ENCODE measurements at regions of chr6 and their contacts with region 1.

Region 1: DNA sequence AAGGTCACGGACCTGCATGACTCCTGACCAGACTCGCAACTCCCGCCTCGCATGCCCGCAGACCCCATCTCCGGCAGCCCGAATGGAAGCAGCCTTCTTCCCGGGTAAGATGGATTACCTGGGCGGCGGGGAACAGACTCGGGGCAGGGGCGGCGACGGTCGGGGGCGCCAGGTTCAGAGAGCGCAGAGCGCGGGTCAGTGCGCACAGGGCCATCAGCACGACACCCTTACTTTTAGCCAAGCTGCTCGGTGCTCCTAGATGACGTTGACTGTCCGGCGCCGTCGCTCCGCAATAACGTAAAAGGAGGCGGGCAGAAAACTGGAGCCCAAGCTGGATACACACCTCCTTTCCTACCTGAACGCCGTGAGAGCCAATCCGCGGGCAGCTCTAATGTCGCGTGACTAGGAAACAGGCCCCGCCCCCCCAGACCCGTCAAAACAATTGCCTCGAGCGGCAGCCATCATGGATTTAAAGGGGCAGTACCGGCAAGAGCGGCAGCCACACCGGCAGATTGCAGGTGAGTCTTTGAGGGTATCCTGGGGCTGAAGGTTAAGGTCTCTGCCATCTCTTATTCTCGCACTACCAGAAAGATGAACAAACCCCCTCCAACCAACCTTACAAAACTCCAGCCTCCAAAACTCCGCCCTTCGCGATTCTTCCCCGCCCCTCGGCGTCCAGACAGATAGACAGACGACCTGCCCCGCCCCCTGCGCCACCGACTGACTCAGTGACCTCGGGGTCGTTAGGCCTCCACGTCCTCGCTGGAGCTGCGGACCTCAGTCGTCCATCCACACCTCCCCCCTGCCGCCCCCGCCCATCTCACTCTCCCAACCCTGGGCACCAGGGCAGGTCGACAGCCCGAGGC is at the starts of genes KLC4 and MRPL2:
- H3K4me3 ChIP-seq: peak within 1 kb of the TSS; percentile 96
- H3K27ac ChIP-seq: peak within 1 kb of the TSS; percentile 76
- H3K4me1 ChIP-seq: peaks cover 9% of the 10 kb centered on the region
- CTCF ChIP-seq: no peak

Region 2: GRCh38 chr6:43045371-43045930 is 13.9 kb before region 1 on chr6:
- CTCF ChIA-PET with region 1: interaction called, 3 read pairs
- POLR2A ChIA-PET with region 1: interaction called, 15 read pairs
- H3K4me3 ChIP-seq: no peak overlapping the region
- H3K27ac ChIP-seq: no peak overlapping the region
- H3K4me1 ChIP-seq: no peaks in the 10 kb centered on the region
- CTCF ChIP-seq: no peak

Region 3: DNA sequence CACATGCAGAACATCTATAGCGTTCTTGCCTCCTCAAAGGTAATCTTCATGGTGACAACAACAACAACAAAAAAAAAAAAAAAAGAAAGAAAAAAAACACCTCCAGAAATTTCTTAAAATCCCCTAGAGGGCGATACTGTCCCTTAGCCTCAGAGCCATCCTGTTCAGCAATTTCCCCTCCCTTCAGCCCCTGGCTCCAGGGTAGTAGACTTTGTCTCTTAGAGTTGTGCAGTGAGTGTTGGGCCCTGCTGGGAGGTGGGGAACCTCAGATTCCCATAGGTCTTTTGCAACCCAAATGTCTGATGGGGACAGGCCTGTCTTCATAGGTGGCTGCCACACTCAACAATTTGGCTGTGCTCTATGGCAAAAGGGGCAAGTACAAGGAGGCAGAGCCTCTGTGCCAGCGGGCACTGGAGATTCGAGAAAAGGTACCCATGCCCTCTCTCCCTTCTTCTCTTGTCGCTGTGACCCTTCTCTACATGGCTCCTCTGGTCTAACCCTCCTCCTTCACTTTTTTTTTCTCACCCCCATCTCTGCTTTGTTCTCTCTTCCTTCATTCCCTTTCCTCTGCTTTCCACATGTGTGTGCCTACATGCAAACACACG is 10.7 kb after region 1 on chr6:
- CTCF ChIA-PET with region 1: interaction called, 15 read pairs
- POLR2A ChIA-PET with region 1: interaction called, 9 read pairs
- H3K4me3 ChIP-seq: no peak overlapping the region
- H3K27ac ChIP-seq: no peak overlapping the region
- H3K4me1 ChIP-seq: no peaks in the 10 kb centered on the region
- CTCF ChIP-seq: peak; percentile 73

Region 4: GRCh38 chr6:43075670-43076463 is 16.5 kb after region 1 on chr6 and contains the start of gene PTK7:
- CTCF ChIA-PET with region 1: interaction called, 15 read pairs
- POLR2A ChIA-PET with region 1: interaction called, 31 read pairs
- H3K4me3 ChIP-seq: peak within 1 kb of the TSS; percentile 88
- H3K27ac ChIP-seq: peak within 1 kb of the TSS; percentile 87
- H3K4me1 ChIP-seq: peaks cover 14% of the 10 kb centered on the region
- CTCF ChIP-seq: no peak

Measured in HEK293 (cell line).